MCF 10A (cell line): ENCODE measurements at regions of chr19 and their contacts with region 1.

Region 1: GRCh38 chr19:33214596-33214995 is 11.1 kb downstream of the SLC7A10 start:
- DNase-seq: peak; percentile 21
- H3K4me3 Mint-ChIP-seq: no peak overlapping the region
- H3K27ac Mint-ChIP-seq: no peak overlapping the region
- H3K4me1 Mint-ChIP-seq: no peaks in the 10 kb centered on the region
- H3K27me3 Mint-ChIP-seq: no peaks in the 10 kb centered on the region
- CTCF ChIP-seq: no peak

Region 2: DNA sequence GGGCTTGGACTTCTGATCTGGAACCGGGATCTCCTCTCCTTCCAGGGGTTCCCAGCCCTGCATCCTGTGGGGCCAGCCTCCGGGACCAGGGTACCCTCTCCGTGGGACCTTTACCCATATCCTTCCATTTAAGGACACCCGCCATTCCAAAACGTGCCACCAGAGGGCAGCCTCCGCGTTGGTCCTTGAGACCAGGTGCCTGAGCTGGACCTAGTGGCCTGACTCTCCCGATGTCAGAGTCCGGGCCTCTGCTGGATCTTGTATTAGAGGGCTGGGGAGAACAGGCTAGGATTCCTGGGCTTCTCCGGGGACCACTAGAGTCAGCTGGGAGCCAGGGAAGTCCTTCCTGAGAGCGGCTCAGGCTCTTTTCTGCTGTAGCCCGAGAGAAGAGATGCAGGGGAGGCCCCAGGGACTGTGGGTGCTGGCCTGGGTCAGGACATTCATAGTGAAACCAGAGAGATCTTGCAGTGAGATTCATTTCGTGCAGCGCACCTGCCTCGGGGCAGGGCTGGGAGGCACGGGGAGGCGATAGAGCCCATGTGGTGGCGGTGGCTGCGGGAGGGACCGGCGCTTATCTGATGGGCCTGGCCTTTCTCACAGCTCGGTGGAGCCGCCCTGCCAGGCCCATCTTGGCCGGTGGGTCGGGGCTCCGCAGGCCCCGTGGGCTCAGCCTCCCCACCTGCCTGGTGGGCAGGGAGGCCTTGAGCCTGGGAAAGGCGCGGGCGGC is 20.8 kb after region 1 on chr19:
- CTCF ChIA-PET with region 1: interaction called, 10 read pairs
- POLR2A ChIA-PET with region 1: no interaction called
- intact Hi-C with region 1: no loop called
- DNase-seq: peak; percentile 80
- H3K4me3 Mint-ChIP-seq: no peak overlapping the region
- H3K27ac Mint-ChIP-seq: no peak overlapping the region
- H3K4me1 Mint-ChIP-seq: no peaks in the 10 kb centered on the region
- H3K27me3 Mint-ChIP-seq: no peaks in the 10 kb centered on the region
- CTCF ChIP-seq: peak; percentile 86